ENCODE measurements at regions of chr18 and their contacts with region 1.

Region 1: DNA sequence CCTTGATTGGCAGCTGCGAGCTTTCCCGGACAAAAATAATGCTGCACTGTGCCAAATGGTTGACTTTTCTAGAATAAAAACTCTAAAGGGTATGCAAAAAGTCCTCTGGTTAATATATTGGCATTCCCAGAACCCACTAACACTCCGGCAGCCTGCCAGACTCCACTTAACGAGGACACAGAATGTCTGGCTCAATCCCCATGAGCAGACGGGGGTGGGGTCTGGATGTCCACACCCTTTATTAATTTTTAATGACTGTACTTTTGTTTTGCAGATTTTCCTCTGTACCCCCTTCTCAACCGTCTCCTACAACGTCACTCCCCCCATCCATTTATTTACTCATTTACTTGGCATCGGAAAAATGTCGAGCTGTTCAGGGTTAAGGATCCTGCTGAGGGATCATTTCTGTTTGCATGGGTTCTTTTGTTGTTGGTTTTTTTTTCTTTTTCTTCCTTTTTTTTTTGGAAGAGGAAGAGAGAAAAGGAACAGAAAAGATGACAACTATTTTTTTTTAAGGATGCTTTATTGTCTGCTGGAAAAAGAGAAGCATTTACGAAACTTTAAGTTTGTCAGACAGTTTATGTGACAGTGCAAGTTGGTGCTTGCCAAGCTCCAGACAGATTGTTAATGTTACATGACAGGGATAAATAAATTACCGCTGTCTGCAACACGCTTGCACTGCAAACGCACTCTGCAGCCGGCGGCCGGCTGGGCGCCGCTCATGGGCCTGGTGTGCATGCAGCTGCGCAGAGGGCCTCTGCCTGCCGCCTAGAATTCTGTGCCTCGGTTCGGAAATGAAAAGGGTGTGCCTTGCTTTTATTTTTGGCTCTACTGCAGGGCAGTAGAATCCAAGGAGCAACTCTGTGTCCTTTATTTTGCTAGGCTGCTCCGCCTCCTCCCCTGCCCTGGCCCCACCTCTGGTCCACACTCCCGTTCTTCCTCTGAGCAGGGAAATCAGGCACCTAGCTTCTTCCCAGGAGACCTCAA is 3.6 kb downstream of the LDLRAD4 start:
- DNase-seq: peak; percentile 67
- H3K4me3 ChIP-seq: no peak overlapping the region
- H3K27ac ChIP-seq: peak overlapping the region; percentile 29 to 38
- H3K4me1 ChIP-seq: peaks cover 24% of the 10 kb centered on the region
- H3K27me3 ChIP-seq: no peaks in the 10 kb centered on the region
- CTCF ChIP-seq: no peak
- POLR2A ChIP-seq: no peak

Region 2: GRCh38 chr18:13137670-13138419 is 84.3 kb before region 1 on chr18:
- intact Hi-C with region 1: no loop called
- DNase-seq: no peak
- H3K4me3 ChIP-seq: peak overlapping the region; percentile 36 to 53
- H3K27ac ChIP-seq: peak overlapping the region; percentile 48
- H3K4me1 ChIP-seq: no peaks in the 10 kb centered on the region
- H3K27me3 ChIP-seq: no peaks in the 10 kb centered on the region
- CTCF ChIP-seq: no peak
- POLR2A ChIP-seq: no peak

Region 3: DNA sequence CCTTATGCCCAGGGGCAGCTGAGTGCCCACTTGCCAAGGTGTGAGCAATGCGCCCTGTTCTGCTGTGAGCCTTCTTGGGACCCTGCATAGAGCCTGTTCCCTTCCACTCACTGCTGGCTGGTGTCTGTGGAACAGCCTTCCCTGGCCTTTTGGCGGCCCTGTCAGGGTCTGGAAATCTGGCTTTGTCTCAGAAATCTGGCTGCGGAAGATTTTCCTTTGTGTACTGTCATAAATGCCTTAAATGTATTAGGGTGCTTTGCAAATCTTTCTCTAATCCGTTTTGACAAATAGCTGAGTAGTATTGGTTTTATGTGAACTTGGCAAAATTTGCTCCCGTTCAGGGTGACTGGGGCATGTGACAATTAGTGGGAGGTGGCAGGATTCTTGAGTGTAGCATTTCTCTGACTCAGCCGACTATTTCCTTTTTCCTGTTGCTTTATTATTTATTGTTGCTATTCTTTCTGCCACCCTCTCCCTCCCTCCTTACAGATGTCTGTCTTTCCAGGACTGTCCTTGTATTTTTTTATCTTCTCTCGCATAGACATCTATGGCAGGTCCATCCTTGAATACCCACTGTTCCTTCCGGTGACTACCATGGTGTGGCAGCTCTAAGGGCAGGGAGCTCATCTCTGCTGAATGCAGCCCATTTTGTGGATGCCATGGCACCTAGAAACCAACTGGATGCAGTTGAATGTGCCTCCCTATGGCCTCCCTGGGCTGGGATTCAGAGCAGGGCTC is 38.2 kb after region 1 on chr18:
- intact Hi-C with region 1: loop called (anchors 2 kb)
- DNase-seq: no peak
- H3K4me3 ChIP-seq: no peak overlapping the region
- H3K27ac ChIP-seq: peak overlapping the region; percentile 46 to 50
- H3K4me1 ChIP-seq: peaks cover 7% of the 10 kb centered on the region
- H3K27me3 ChIP-seq: no peaks in the 10 kb centered on the region
- CTCF ChIP-seq: no peak
- POLR2A ChIP-seq: no peak

Region 4: DNA sequence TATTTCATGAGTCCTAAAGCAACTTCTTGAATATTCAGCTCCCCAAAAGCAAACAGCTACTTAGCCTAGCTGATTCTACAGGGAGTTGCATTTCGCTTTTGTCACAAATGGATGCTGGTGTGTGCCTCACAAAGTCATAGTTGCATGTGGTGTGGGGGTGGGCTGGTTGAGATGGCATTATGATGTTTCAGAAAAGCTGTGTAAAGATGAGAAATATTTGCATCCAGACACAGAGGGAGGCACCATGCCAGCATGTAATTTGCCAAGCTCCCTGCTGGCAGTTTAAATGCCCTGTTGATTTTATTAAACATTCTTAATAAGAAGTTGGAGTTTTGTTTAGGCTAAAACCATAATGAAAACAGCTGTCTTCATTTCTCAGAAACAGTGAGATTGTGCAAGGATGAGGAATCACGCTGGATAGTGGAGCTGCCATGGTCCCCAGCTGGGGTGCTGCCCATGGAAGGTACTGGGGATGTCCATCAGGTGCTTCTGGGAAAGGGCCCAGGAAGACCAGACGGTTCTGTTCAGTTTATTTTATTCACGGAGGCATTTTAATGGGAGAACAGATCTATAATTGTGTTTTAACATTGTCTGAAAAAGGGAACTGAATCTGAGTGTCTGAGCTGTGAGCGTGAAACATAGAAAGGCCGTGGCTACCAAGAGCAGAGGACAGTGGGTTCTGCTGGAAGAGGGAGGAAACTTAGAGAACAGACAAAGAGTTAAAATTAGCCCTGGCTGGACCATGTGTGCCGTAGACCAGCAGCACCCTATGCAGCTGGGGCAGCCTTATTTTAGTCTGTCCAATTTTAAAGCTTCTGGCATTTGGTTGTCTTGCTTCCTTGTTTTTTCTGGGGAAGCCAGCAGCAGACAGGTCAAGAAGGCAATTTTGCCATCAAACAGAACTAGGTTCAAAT is 327.1 kb after region 1 on chr18:
- intact Hi-C with region 1: loop called (anchors 2 kb)
- DNase-seq: peak; percentile 55
- H3K4me3 ChIP-seq: no peak overlapping the region
- H3K27ac ChIP-seq: peak overlapping the region; percentile 26 to 53
- H3K4me1 ChIP-seq: peaks cover 12% of the 10 kb centered on the region
- H3K27me3 ChIP-seq: no peaks in the 10 kb centered on the region
- CTCF ChIP-seq: no peak
- POLR2A ChIP-seq: no peak

Measured in prostate gland (tissue), 2 donors.